T-cell (primary cell): ENCODE measurements at regions of chr12 and their contacts with region 1.

Region 1: GRCh38 chr12:64551698-64552097 is 58.6 kb upstream of the RASSF3 start:
- DNase-seq: no peak
- ATAC-seq: no peak
- H3K4me3 ChIP-seq: no peak overlapping the region
- H3K4me3 Mint-ChIP-seq: no peak overlapping the region
- H3K27ac ChIP-seq: no peak overlapping the region
- H3K27ac Mint-ChIP-seq: no peak overlapping the region
- H3K4me1 ChIP-seq: peaks cover 3 to 4% of the 10 kb centered on the region in 2 experiments
- H3K4me1 Mint-ChIP-seq: peaks cover 7 to 13% (median 10%) of the 10 kb centered on the region in 3 donors
- H3K27me3 ChIP-seq: peaks cover 0 to 4% of the 10 kb centered on the region in 2 experiments
- H3K27me3 Mint-ChIP-seq: peaks cover 0 to 2% of the 10 kb centered on the region in 2 donors

Region 2: GRCh38 chr12:64293654-64294364 is 257.9 kb before region 1 on chr12:
- CTCF ChIA-PET with region 1: no interaction called
- POLR2A ChIA-PET with region 1: no interaction called
- DNase-seq: no peak
- ATAC-seq: no peak
- H3K4me3 ChIP-seq: no peak overlapping the region
- H3K4me3 Mint-ChIP-seq: no peak overlapping the region
- H3K27ac ChIP-seq: no peak overlapping the region
- H3K27ac Mint-ChIP-seq: no peak overlapping the region
- H3K4me1 ChIP-seq: no peaks in the 10 kb centered on the region
- H3K4me1 Mint-ChIP-seq: no peaks in the 10 kb centered on the region
- H3K27me3 ChIP-seq: peaks cover 0 to 5% of the 10 kb centered on the region in 2 experiments
- H3K27me3 Mint-ChIP-seq: peaks cover 0 to 3% of the 10 kb centered on the region in 2 donors

Region 3: GRCh38 chr12:64610149-64610678 is 58.5 kb after region 1 on chr12 and contains the start of gene RASSF3:
- CTCF ChIA-PET with region 1: interaction called, 4 to 33 read pairs
- POLR2A ChIA-PET with region 1: interaction called in 1 of 2 experiments, 3 read pairs
- DNase-seq: peak; percentile 43 to 87 (median 62)
- ATAC-seq: peak; percentile 66 to 73 (median 70)
- H3K4me3 ChIP-seq: peak within 1 kb of the TSS; percentile 84 to 92
- H3K4me3 Mint-ChIP-seq: peak within 1 kb of the TSS; percentile 93 to 99 (median 97)
- H3K27ac ChIP-seq: peak within 1 kb of the TSS; percentile 78
- H3K27ac Mint-ChIP-seq: peak within 1 kb of the TSS; percentile 96 to 99
- H3K4me1 ChIP-seq: peaks cover 19 to 34% of the 10 kb centered on the region in 2 experiments
- H3K4me1 Mint-ChIP-seq: peaks cover 38 to 51% (median 50%) of the 10 kb centered on the region in 3 donors
- H3K27me3 ChIP-seq: no peaks in the 10 kb centered on the region
- H3K27me3 Mint-ChIP-seq: no peaks in the 10 kb centered on the region
- total RNA-seq, gene RASSF3: 113 to 167 (median 149) TPM

Region 4: DNA sequence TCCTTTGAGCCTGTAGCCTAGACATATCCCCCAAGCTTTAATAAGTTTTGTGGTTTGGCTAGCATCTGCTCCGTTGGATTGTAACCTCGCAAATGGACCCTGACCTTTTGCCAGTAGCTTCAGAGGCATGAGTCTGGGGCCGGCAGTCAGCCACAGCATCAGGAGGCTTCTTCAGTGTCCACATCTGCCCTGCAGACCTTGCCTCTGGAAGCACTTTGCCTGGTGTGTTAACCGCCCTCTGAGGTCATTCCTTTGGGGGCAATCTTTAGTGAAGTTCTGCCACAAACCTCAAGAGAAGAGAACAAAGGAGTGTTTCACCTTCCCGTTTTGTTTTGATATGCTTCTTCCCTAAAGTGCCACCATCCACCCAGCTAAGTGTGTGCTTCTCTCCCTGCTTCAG is 136.1 kb after region 1 on chr12:
- CTCF ChIA-PET with region 1: interaction called, 7 to 12 read pairs
- POLR2A ChIA-PET with region 1: no interaction called
- DNase-seq: peak in 1 of 35 experiments; percentile 28
- ATAC-seq: peak in 1 of 4 experiments; percentile 11
- H3K4me3 ChIP-seq: no peak overlapping the region
- H3K4me3 Mint-ChIP-seq: peak overlapping the region; percentile 29 to 73 (median 51)
- H3K27ac ChIP-seq: peak overlapping the region; percentile 68
- H3K27ac Mint-ChIP-seq: peak overlapping the region; percentile 88 to 94
- H3K4me1 ChIP-seq: peaks cover 57 to 93% of the 10 kb centered on the region in 2 experiments
- H3K4me1 Mint-ChIP-seq: peaks cover 77 to 86% (median 86%) of the 10 kb centered on the region in 3 donors
- H3K27me3 ChIP-seq: no peaks in the 10 kb centered on the region
- H3K27me3 Mint-ChIP-seq: no peaks in the 10 kb centered on the region

Region 5: GRCh38 chr12:64714551-64714968 is 162.9 kb after region 1 on chr12:
- CTCF ChIA-PET with region 1: interaction called, 9 to 10 read pairs
- POLR2A ChIA-PET with region 1: no interaction called
- DNase-seq: peak in 25 of 35 experiments; percentile 5 to 55 (median 27)
- ATAC-seq: peak in 3 of 4 experiments; percentile 61 to 78 (median 63)
- H3K4me3 ChIP-seq: no peak overlapping the region
- H3K4me3 Mint-ChIP-seq: no peak overlapping the region
- H3K27ac ChIP-seq: peak overlapping the region; percentile 57
- H3K27ac Mint-ChIP-seq: no peak overlapping the region
- H3K4me1 ChIP-seq: peaks cover 4 to 13% of the 10 kb centered on the region in 2 experiments
- H3K4me1 Mint-ChIP-seq: peaks cover 25 to 37% (median 36%) of the 10 kb centered on the region in 3 donors
- H3K27me3 ChIP-seq: no peaks in the 10 kb centered on the region
- H3K27me3 Mint-ChIP-seq: no peaks in the 10 kb centered on the region